Sigmoid colon (tissue), 7 donors: ENCODE measurements at regions of chr2 and their contacts with region 1.

Region 1: DNA sequence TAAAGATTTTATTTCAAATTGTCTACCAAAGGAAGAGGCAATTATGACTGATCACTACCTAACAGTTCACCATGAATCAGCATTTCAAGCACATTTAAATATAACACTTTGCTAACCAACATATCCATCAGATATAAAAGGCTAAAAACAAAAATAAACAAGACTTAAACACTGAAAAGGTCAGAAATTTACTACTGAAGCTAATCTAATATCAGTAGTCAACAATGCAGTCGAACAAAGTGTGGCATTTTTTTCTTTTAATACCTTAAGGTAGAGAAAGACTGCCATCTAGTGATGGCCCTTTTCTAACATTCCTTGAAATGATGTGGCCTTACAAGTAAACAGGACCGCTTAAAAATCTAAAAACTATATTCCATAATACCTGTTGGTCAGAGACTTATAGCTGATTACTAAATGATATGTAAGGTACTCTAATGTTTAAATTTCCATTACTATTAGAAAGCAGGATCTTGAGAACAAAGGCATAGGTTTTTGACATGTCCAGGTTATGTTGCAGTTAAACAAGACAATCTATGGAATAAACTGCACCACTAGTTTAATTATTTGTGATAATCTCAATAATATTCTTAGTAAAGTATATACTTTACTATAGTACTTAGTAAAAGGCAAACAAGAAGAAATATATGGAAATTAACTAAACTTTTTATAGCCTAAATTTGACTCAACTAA is 80.0 kb downstream of the EXOC6B start:
- DNase-seq: no peak
- H3K4me3 ChIP-seq: no peak overlapping the region
- H3K27ac ChIP-seq: no peak overlapping the region
- H3K4me1 ChIP-seq: peaks cover 0 to 5% (median 0%) of the 10 kb centered on the region in 4 donors
- H3K27me3 ChIP-seq: no peaks in the 10 kb centered on the region
- CTCF ChIP-seq: peak in 3 of 4 experiments; percentile 27 to 55 (median 37)
- EP300 ChIP-seq: no peak
- POLR2A ChIP-seq: no peak

Region 2: GRCh38 chr2:71545572-71546274 is 1200.1 kb before region 1 on chr2:
- intact Hi-C with region 1: loop called (anchors 10 kb)
- DNase-seq: peak; percentile 70
- H3K4me3 ChIP-seq: no peak overlapping the region
- H3K27ac ChIP-seq: no peak overlapping the region
- H3K4me1 ChIP-seq: no peaks in the 10 kb centered on the region
- H3K27me3 ChIP-seq: no peaks in the 10 kb centered on the region
- CTCF ChIP-seq: peak; percentile 28 to 61 (median 46)
- EP300 ChIP-seq: no peak
- POLR2A ChIP-seq: no peak

Region 3: DNA sequence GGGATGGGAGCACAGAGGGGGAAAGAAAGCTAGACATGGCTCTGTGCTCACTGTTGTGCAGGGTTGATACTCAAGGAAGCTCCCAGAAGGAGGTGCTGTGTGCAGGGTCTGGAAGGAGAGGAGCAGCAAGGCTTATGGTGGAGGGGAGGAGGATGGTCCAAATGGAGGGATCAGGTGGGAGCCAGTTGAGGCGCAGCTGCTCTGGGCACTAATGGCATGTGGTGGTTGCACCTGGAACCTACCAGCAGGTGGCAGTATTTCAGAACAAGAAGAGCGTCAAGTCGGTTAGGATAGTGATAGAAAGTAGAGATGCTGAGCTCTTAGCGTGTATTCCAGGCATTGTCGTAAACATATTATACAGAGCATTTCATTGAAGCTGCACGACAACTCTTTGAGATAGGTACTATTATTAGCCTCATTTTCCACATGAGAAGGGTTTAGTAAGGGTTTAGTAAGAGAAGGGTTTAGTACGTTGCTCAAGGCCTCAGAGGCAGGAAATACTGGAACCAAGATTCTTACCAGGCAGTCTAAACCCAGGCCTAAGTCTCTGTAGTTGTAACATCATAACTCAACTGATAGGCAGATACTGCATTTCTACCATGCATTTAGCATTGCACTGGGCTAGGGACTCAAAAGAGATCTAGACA is 821.8 kb before region 1 on chr2:
- intact Hi-C with region 1: loop called (anchors 10 kb)
- DNase-seq: no peak
- H3K4me3 ChIP-seq: no peak overlapping the region
- H3K27ac ChIP-seq: peak overlapping the region in 1 of 4 donors; percentile 74
- H3K4me1 ChIP-seq: peaks cover 0 to 28% (median 21%) of the 10 kb centered on the region in 4 donors
- H3K27me3 ChIP-seq: no peaks in the 10 kb centered on the region
- CTCF ChIP-seq: peak; percentile 65 to 88 (median 74)
- EP300 ChIP-seq: no peak
- POLR2A ChIP-seq: no peak

Region 4: GRCh38 chr2:72895759-72896281 is 150.0 kb after region 1 on chr2:
- intact Hi-C with region 1: no loop called
- DNase-seq: no peak
- H3K4me3 ChIP-seq: peak overlapping the region in 1 of 4 donors; percentile 10
- H3K27ac ChIP-seq: no peak overlapping the region
- H3K4me1 ChIP-seq: peaks cover 0 to 14% (median 6%) of the 10 kb centered on the region in 4 donors
- H3K27me3 ChIP-seq: peaks cover 0 to 33% (median 10%) of the 10 kb centered on the region in 3 donors
- CTCF ChIP-seq: no peak
- EP300 ChIP-seq: no peak
- POLR2A ChIP-seq: no peak

Region 5: GRCh38 chr2:73343992-73344391 is 598.2 kb after region 1 on chr2:
- intact Hi-C with region 1: no loop called
- DNase-seq: no peak
- H3K4me3 ChIP-seq: no peak overlapping the region
- H3K27ac ChIP-seq: no peak overlapping the region
- H3K4me1 ChIP-seq: no peaks in the 10 kb centered on the region
- H3K27me3 ChIP-seq: no peaks in the 10 kb centered on the region
- CTCF ChIP-seq: no peak
- EP300 ChIP-seq: no peak
- POLR2A ChIP-seq: no peak